ENCODE measurements at regions of chr2 and their contacts with region 1.

Region 1: DNA sequence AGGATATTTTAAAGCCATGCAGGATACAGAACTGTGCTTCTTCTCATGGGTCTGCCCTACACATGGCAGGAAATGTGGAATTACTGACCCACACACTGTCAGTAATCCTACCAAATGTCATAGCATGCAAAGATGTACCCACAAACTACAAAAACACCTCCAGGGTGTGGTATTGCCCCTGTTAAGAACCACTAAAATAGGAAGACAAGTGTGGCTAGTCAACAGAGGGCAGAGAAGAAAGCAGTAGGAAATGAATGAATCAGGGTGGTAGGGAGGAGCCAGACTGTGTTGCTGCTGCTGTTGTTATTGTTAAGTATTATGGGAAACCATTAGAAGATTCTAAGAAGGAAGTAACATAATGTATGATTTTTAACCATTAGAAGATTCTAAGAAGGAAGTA is 556.7 kb upstream of the ACVR2A start:
- DNase-seq: peak; percentile 57
- H3K4me3 Mint-ChIP-seq: peak overlapping the region; percentile 1
- H3K27ac Mint-ChIP-seq: peak overlapping the region; percentile 87
- H3K4me1 Mint-ChIP-seq: peaks cover 56% of the 10 kb centered on the region
- H3K27me3 Mint-ChIP-seq: no peaks in the 10 kb centered on the region

Region 2: DNA sequence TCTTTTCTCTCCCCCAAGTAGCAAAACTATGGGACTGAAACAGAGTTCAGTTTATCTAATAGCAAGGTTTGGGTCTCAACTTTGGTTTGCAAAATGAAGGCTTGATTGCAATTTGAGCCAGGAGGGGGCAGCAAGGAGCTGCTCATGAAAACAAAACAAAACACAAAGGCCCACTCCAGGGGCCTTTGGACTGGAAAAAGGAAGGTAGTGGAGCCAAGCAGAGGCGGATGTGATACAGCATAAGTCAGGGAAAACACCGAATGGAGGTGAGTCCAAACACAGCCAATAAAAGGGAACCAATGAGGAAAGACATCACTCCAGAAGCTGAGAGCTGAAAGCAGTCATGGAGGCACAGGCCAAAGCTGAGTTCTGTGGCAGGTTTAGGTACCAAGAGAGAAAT is 243.0 kb before region 1 on chr2:
- CTCF ChIA-PET with region 1: no interaction called
- POLR2A ChIA-PET with region 1: no interaction called
- DNase-seq: peak; percentile 62
- H3K4me3 Mint-ChIP-seq: no peak overlapping the region
- H3K27ac Mint-ChIP-seq: no peak overlapping the region
- H3K4me1 Mint-ChIP-seq: peaks cover 4% of the 10 kb centered on the region
- H3K27me3 Mint-ChIP-seq: peaks cover 5% of the 10 kb centered on the region

Region 3: GRCh38 chr2:147110317-147110716 is 177.8 kb before region 1 on chr2:
- CTCF ChIA-PET with region 1: no interaction called
- POLR2A ChIA-PET with region 1: no interaction called
- DNase-seq: no peak
- H3K4me3 Mint-ChIP-seq: no peak overlapping the region
- H3K27ac Mint-ChIP-seq: no peak overlapping the region
- H3K4me1 Mint-ChIP-seq: no peaks in the 10 kb centered on the region
- H3K27me3 Mint-ChIP-seq: peaks cover 2% of the 10 kb centered on the region

Region 4: DNA sequence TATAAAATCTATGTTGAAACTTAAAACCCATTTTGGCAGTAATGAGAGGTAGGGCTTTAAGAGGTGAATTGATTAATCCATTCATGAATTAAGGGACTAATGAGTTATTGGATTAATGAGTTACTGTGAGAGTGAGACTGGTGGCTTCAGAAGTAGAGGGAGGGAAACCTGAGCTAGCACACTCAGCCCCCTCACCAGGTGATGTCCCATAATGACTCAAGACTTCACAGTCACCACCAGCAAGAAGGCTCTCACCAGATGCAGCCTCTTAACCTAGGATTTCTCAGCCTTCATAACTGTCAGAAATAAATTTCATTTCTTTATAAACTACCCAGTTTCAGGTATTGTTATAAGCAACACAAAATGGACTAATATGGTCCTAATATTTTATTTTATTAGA is 65.0 kb before region 1 on chr2:
- CTCF ChIA-PET with region 1: no interaction called
- POLR2A ChIA-PET with region 1: no interaction called
- DNase-seq: no peak
- H3K4me3 Mint-ChIP-seq: no peak overlapping the region
- H3K27ac Mint-ChIP-seq: no peak overlapping the region
- H3K4me1 Mint-ChIP-seq: no peaks in the 10 kb centered on the region
- H3K27me3 Mint-ChIP-seq: no peaks in the 10 kb centered on the region

Region 5: DNA sequence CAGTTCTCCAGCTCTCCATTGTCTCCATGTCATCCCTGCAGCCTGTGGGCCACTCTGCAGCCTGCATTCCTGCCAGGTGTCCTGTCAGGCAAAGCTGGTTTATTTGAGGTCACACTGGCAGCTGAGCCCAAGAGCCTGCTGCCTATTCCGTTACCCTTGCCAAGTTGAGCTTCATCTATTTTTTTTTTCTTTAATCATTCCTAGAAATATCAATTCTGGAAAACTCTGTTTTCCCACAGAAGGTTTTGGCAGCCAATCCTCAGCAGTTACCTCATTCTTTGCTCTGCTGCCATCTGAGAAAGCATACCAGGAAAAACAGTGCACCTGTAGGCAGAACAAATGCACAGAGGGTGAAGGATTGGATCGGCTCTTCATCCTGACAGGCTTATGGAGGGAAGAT is 145.7 kb after region 1 on chr2:
- CTCF ChIA-PET with region 1: no interaction called
- POLR2A ChIA-PET with region 1: no interaction called
- DNase-seq: no peak
- H3K4me3 Mint-ChIP-seq: no peak overlapping the region
- H3K27ac Mint-ChIP-seq: no peak overlapping the region
- H3K4me1 Mint-ChIP-seq: peaks cover 8% of the 10 kb centered on the region
- H3K27me3 Mint-ChIP-seq: no peaks in the 10 kb centered on the region

Region 6: DNA sequence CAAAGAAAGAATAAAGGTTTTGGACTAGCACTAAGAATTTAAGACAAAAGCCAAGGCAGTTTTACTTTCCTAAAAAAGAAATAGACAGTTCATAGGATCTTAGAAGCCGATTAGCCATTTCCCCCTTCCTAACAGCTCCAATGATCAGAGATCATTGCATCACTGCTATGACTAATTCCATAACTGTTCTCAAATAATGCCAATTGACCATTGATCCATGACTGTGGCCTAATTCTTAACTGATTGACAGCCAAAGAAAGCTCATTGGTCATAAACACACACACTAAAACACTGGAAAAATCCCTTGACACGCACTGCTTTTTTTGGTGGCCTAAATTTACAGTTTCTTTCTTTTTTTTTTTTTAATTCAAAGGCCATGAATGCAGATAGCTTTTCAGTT is 211.7 kb after region 1 on chr2:
- CTCF ChIA-PET with region 1: no interaction called
- POLR2A ChIA-PET with region 1: interaction called, 13 read pairs
- DNase-seq: no peak
- H3K4me3 Mint-ChIP-seq: peak overlapping the region; percentile 33
- H3K27ac Mint-ChIP-seq: peak overlapping the region; percentile 98
- H3K4me1 Mint-ChIP-seq: peaks cover 75% of the 10 kb centered on the region
- H3K27me3 Mint-ChIP-seq: no peaks in the 10 kb centered on the region